ENCODE measurements at regions of chr20 and their contacts with region 1.

Region 1: DNA sequence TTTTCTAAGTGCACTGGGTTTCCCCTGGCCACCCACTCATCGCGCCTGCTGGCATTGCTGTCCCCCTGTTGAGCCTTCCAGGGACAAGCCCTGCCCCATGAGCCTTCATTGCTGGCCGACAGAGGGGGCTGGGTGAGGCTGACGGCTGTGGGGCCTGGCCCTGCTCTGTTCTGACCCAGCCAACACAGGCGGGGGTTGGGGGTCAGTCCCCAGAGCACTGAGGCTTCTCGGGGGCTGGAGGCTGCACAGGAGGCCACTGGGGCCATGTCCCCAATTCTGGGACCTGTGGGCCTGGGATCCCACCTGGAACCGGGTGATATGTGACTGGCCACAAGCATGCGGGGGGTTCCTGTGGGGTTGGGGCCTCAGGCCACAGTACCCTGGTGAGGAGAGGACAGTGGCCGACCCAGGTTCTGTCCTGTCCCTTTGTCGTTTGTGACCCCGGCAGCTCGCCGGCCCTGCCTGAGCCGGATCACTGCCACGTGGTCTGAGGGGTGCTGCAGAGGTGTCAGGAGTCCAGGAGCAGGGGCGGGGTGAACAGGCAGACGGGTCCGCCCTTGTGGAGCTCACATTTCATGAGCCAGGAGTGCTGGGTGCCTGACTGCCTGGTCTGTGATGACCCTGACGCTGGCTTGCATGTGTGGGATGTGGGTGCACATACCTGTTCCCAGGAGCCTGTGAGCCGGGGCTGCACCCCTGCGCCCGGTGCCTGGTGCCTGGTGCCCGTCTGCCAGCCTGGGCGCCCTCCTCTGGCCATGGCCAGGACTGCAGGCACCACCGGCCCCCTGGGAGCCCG is 2.1 kb upstream of the COL20A1 start:
- DNase-seq: peak; percentile 65
- ATAC-seq: peak; percentile 83
- H3K4me3 Mint-ChIP-seq: no peak overlapping the region
- H3K27ac Mint-ChIP-seq: no peak overlapping the region
- H3K4me1 Mint-ChIP-seq: no peaks in the 10 kb centered on the region
- H3K27me3 Mint-ChIP-seq: peaks cover 9% of the 10 kb centered on the region
- CTCF ChIP-seq: no peak

Region 2: DNA sequence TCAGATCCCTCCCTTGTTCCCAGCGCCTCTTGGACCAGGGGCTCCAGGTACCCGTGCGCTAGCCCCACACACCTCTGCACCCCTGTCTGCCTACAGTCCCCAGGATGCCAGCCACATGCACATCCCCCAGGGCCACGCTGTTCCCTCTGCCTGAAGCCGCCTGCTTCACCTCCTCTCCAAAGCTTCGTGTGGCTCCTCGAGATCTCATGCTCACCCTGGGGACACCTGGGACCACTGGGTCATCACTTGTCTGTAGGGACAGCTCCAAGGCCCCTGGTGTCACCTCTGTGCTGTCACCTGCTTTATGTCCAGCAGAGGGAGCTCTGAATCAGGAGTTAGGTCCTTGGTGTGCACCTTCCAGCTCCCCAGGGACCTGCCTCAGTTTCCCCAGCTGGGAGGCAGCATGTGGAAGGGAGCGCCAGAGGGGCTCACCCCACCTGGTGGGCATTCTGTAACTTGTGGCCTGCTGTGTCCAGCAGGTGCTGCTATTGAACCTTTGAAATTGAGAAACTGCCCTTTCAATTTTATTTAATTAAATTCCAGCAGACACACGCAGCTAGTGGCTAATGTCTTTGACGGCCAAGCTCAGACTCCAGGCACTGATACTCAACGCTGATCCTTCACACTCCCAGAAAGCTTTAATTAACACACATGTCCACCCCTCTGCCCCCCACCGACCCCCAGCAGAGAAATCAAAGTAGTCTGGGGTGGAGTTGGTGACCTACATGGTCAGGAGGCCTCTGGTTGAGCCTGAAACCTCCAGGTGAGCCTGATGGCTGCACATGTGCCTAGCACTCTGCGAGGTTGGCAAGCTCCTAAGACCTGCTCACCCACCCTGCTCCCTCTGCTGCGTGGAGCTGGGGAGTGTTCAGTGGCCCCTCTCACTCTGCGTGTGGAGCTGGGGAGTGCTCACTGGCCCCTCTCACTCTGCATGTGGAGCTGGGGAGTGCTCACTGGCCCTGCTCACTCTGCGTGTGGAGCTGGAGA is 67.4 kb before region 1 on chr20:
- CTCF ChIA-PET with region 1: interaction called, 5 read pairs
- POLR2A ChIA-PET with region 1: no interaction called
- intact Hi-C with region 1: loop called (anchors 1 kb)
- DNase-seq: no peak
- ATAC-seq: peak; percentile 65
- H3K4me3 Mint-ChIP-seq: no peak overlapping the region
- H3K27ac Mint-ChIP-seq: no peak overlapping the region
- H3K4me1 Mint-ChIP-seq: no peaks in the 10 kb centered on the region
- H3K27me3 Mint-ChIP-seq: peaks cover 11% of the 10 kb centered on the region
- CTCF ChIP-seq: peak; percentile 42

Region 3: GRCh38 chr20:63272584-63273579 is 18.0 kb before region 1 on chr20 and contains the start of gene ARFGAP1:
- CTCF ChIA-PET with region 1: no interaction called
- POLR2A ChIA-PET with region 1: no interaction called
- intact Hi-C with region 1: loop called (anchors 1 kb)
- DNase-seq: peak; percentile 94
- ATAC-seq: peak; percentile 94
- H3K4me3 Mint-ChIP-seq: peak within 1 kb of the TSS; percentile 86
- H3K27ac Mint-ChIP-seq: peak within 1 kb of the TSS; percentile 66
- H3K4me1 Mint-ChIP-seq: peaks cover 21% of the 10 kb centered on the region
- H3K27me3 Mint-ChIP-seq: no peaks in the 10 kb centered on the region
- CTCF ChIP-seq: no peak
- total RNA-seq, gene ARFGAP1: 72.4 and 85.8 TPM in 2 replicates